GM12878 (cell line): ENCODE measurements at regions of chr5 and their contacts with region 1.

Region 1: GRCh38 chr5:64147849-64148441 is 17.7 kb upstream of the RNF180 start:
- DNase-seq: no peak
- ATAC-seq: peak; percentile 76
- H3K4me3 ChIP-seq: no peak overlapping the region
- H3K27ac ChIP-seq: no peak overlapping the region
- H3K4me1 ChIP-seq: no peaks in the 10 kb centered on the region
- H3K27me3 ChIP-seq: no peaks in the 10 kb centered on the region
- CTCF ChIP-seq: peak; percentile 57 to 82 (median 67)
- EP300 ChIP-seq: no peak
- POLR2A ChIP-seq: no peak
- RAD21 ChIP-seq: peak; percentile 73

Region 2: DNA sequence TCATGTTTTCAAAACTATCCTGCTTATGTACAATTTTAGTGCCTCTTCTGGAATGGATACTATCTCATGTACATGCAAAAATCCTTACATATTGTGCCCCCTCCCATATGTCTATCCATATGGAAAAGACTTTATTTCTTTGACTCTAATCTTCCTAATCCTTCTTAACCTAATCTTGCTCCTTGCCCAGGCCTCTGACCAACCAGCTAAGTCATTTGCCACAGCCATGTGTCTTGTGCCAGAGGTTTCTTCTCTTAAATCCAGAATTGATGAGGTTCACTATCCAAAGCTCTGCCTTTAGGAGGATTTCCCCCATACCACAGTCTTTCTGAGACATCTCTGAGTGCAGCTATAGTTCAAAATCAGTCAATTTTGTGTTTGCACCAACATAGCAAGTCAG is 51.2 kb before region 1 on chr5:
- CTCF ChIA-PET with region 1: no interaction called
- POLR2A ChIA-PET with region 1: no interaction called
- RAD21 ChIA-PET with region 1: no interaction called
- SMC1A ChIA-PET with region 1: no interaction called
- in situ Hi-C with region 1: no loop called
- intact Hi-C with region 1: no loop called
- DNase-seq: no peak
- ATAC-seq: no peak
- H3K4me3 ChIP-seq: no peak overlapping the region
- H3K27ac ChIP-seq: no peak overlapping the region
- H3K4me1 ChIP-seq: no peaks in the 10 kb centered on the region
- H3K27me3 ChIP-seq: no peaks in the 10 kb centered on the region
- CTCF ChIP-seq: no peak
- EP300 ChIP-seq: no peak
- POLR2A ChIP-seq: no peak
- RAD21 ChIP-seq: no peak

Region 3: DNA sequence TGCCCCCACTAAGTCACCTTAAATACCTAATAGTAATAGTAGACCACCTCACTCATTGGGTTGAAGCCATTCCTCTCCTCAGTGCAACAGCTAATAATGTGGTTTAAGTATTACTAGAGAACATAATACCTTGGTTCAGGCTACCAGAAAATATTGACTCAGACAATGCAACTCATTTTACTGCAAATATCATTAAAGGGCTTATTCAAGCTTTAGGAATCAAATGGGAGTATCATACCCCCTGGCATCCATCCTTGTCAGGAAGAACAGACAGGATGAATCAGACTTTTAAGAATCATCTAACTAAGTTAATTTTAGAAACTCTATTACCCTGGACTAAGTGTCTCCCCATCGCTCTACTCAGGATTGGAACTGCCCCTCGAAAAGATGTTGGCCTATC is 10.9 kb after region 1 on chr5:
- CTCF ChIA-PET with region 1: interaction called, 54 read pairs
- POLR2A ChIA-PET with region 1: no interaction called
- RAD21 ChIA-PET with region 1: interaction called, 13 read pairs
- SMC1A ChIA-PET with region 1: interaction called, 10 read pairs
- in situ Hi-C with region 1: no loop called
- intact Hi-C with region 1: no loop called
- DNase-seq: no peak
- ATAC-seq: no peak
- H3K4me3 ChIP-seq: no peak overlapping the region
- H3K27ac ChIP-seq: no peak overlapping the region
- H3K4me1 ChIP-seq: no peaks in the 10 kb centered on the region
- H3K27me3 ChIP-seq: 0 out of 4 replicates have a peak, but pooled peaks cover 0 to 2% of the 10 kb centered on the region in 2 experiments
- CTCF ChIP-seq: no peak
- EP300 ChIP-seq: no peak
- POLR2A ChIP-seq: no peak
- RAD21 ChIP-seq: no peak

Region 4: GRCh38 chr5:64207978-64208377 is 60.0 kb after region 1 on chr5:
- CTCF ChIA-PET with region 1: interaction called, 120 read pairs
- POLR2A ChIA-PET with region 1: interaction called, 3 read pairs
- RAD21 ChIA-PET with region 1: interaction called, 99 read pairs
- SMC1A ChIA-PET with region 1: interaction called, 115 read pairs
- in situ Hi-C with region 1: loop called (anchors 5 kb)
- intact Hi-C with region 1: loop called (anchors 1 kb)
- DNase-seq: no peak
- ATAC-seq: no peak
- H3K4me3 ChIP-seq: no peak overlapping the region
- H3K27ac ChIP-seq: no peak overlapping the region
- H3K4me1 ChIP-seq: no peaks in the 10 kb centered on the region
- H3K27me3 ChIP-seq: no peaks in the 10 kb centered on the region
- CTCF ChIP-seq: no peak; a peak in 1 of 6 replicates
- EP300 ChIP-seq: no peak
- POLR2A ChIP-seq: no peak
- RAD21 ChIP-seq: no peak

Region 5: DNA sequence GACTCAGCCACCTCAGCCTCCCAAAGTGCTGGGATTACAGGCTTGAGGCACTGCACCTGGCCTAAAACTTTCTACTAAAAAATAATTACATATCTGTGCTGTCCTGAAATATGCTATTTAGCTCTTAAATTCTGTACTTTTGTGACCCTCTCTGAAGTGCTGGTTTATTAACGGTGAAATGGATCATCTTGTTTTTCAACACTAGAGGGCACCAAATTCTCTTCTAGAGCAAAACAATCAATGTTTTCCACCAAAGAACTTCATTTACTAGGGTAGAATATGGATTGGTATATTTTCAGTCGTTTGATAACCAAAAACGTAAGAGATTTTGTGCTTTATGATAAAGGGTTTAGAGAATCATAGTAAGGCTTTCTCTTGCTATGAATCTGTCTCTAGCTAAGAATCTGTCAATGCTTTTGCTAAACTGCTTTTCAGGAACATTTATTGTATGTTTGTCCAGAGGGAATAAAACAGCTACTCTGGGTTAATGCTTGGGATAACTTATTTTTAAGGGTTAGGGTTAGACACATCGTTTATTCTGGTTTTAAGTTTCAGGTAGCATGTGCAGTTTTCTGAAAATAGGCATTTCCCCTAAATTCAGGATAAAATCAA is 81.3 kb after region 1 on chr5:
- CTCF ChIA-PET with region 1: interaction called, 23 read pairs
- POLR2A ChIA-PET with region 1: no interaction called
- RAD21 ChIA-PET with region 1: interaction called, 11 read pairs
- SMC1A ChIA-PET with region 1: interaction called, 35 read pairs
- in situ Hi-C with region 1: no loop called
- intact Hi-C with region 1: no loop called
- DNase-seq: no peak
- ATAC-seq: peak; percentile 78
- H3K4me3 ChIP-seq: no peak overlapping the region
- H3K27ac ChIP-seq: no peak overlapping the region
- H3K4me1 ChIP-seq: no peaks in the 10 kb centered on the region
- H3K27me3 ChIP-seq: no peaks in the 10 kb centered on the region
- CTCF ChIP-seq: peak; percentile 46 to 58 (median 57); a peak in 5 of 6 replicates
- EP300 ChIP-seq: no peak
- POLR2A ChIP-seq: no peak
- RAD21 ChIP-seq: peak; percentile 64

Region 6: DNA sequence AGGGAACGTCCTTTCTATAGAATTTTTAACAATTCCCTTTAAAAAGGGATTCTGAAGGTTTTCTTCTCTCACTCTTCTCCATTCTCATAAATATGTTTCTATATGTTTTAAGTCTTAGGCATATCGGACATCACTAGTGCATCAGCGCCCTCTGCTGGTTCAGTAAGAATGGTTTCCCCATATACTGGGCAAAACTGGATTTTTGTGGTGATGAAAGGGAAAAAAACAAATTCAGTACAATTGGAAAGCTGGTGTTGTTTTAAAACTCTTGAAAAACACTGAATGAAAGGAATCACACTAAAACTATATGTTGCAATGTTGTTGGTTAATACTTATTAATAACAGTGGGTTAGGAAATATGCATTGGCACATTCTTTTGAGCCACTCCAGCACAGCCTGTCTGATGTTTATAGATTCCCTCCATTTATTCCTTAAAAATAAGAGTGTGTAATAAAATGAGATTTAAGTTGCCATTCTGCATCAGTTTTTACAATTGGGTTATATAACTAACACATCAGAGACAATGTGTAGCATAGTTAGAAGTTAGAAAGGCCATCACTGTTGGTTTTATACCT is 636.6 kb after region 1 on chr5:
- CTCF ChIA-PET with region 1: interaction called, 10 read pairs
- POLR2A ChIA-PET with region 1: no interaction called
- RAD21 ChIA-PET with region 1: no interaction called
- SMC1A ChIA-PET with region 1: interaction called, 7 read pairs
- in situ Hi-C with region 1: no loop called
- intact Hi-C with region 1: loop called (anchors 10 kb)
- DNase-seq: peak; percentile 26
- ATAC-seq: peak; percentile 92
- H3K4me3 ChIP-seq: no peak overlapping the region
- H3K27ac ChIP-seq: no peak overlapping the region
- H3K4me1 ChIP-seq: no peaks in the 10 kb centered on the region
- H3K27me3 ChIP-seq: no peaks in the 10 kb centered on the region
- CTCF ChIP-seq: peak; percentile 64 to 85 (median 70)
- EP300 ChIP-seq: no peak
- POLR2A ChIP-seq: no peak
- RAD21 ChIP-seq: peak; percentile 96